ENCODE measurements at regions of chr2 and their contacts with region 1.

Region 1: GRCh38 chr2:196233021-196233804 is 61.8 kb upstream of the STK17B start:
- DNase-seq: no peak
- ATAC-seq: peak; percentile 15
- H3K4me3 Mint-ChIP-seq: peak overlapping the region; percentile 24
- H3K27ac Mint-ChIP-seq: peak overlapping the region; percentile 91
- H3K4me1 Mint-ChIP-seq: peaks cover 81% of the 10 kb centered on the region
- H3K27me3 Mint-ChIP-seq: no peaks in the 10 kb centered on the region
- CTCF ChIP-seq: no peak

Region 2: GRCh38 chr2:196160101-196160500 is 73.1 kb before region 1 on chr2:
- CTCF ChIA-PET with region 1: interaction called, 3 read pairs
- POLR2A ChIA-PET with region 1: interaction called, 16 read pairs
- intact Hi-C with region 1: no loop called
- DNase-seq: no peak
- ATAC-seq: peak; percentile 75
- H3K4me3 Mint-ChIP-seq: peak overlapping the region; percentile 57
- H3K27ac Mint-ChIP-seq: peak overlapping the region; percentile 84
- H3K4me1 Mint-ChIP-seq: peaks cover 86% of the 10 kb centered on the region
- H3K27me3 Mint-ChIP-seq: no peaks in the 10 kb centered on the region
- CTCF ChIP-seq: no peak

Region 3: GRCh38 chr2:196182439-196183171 is 50.6 kb before region 1 on chr2:
- CTCF ChIA-PET with region 1: interaction called, 7 read pairs
- POLR2A ChIA-PET with region 1: interaction called, 543 read pairs
- intact Hi-C with region 1: loop called (anchors 1 kb)
- DNase-seq: no peak
- ATAC-seq: peak; percentile 83
- H3K4me3 Mint-ChIP-seq: peak overlapping the region; percentile 67
- H3K27ac Mint-ChIP-seq: peak overlapping the region; percentile 95
- H3K4me1 Mint-ChIP-seq: peaks cover 77% of the 10 kb centered on the region
- H3K27me3 Mint-ChIP-seq: no peaks in the 10 kb centered on the region
- CTCF ChIP-seq: no peak

Region 4: GRCh38 chr2:197304556-197305011 is 1071.4 kb after region 1 on chr2:
- CTCF ChIA-PET with region 1: no interaction called
- POLR2A ChIA-PET with region 1: interaction called, 11 read pairs
- intact Hi-C with region 1: no loop called
- DNase-seq: no peak
- ATAC-seq: peak; percentile 5
- H3K4me3 Mint-ChIP-seq: peak overlapping the region; percentile 74
- H3K27ac Mint-ChIP-seq: peak overlapping the region; percentile 95
- H3K4me1 Mint-ChIP-seq: peaks cover 93% of the 10 kb centered on the region
- H3K27me3 Mint-ChIP-seq: no peaks in the 10 kb centered on the region
- CTCF ChIP-seq: no peak